OCI-LY7 (cell line): ENCODE measurements at regions of chr1 and their contacts with region 1.

Region 1: GRCh38 chr1:201023517-201023902 is at the start of gene KIF21B:
- DNase-seq: peak; percentile 92
- H3K4me3 ChIP-seq: peak within 1 kb of the TSS; percentile 80
- H3K27ac ChIP-seq: peak within 1 kb of the TSS; percentile 97
- H3K4me1 ChIP-seq: peaks cover 83% of the 10 kb centered on the region
- CTCF ChIP-seq: no peak
- total RNA-seq, gene KIF21B: 25.0 and 30.5 TPM in 2 replicates

Region 2: DNA sequence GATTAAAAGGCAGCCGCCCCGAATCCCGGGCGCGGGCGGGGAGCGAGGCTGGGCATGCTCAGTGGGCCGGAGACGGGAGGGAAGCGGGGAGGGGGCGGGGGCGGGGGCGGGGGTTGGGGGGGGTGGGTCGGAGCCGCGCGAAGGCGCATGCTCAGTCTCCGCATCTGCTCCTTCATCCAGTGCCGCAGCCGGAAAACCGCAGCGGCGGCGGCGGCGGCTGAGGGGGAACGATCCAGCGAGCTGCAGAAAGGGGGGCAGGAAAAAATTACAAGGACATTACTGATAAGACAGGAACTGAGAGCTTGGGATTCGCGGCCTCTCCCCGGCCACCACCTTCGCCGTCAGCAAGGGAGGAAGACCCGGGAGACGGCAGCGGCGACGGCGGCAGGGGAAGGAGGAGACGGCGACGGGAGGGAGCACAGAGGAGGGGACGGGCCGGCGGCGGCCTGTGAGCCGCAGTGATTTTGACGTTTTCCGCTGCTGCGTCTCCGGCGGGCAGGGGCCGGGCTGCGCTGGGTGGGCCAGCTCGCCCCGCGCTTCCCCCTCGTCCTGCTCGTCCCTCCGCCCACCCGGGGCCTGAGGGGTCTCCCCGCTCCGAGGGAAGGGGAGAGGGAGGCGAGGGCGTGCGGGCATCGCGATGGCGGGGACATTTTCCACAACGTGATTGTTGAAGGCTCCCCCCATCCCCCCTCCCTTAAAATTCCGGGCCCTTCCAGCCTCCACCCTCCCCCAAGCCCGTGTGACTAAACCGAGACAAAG is 284.6 kb before region 1 on chr1 and contains the start of gene CAMSAP2:
- CTCF ChIA-PET with region 1: no interaction called
- POLR2A ChIA-PET with region 1: no interaction called
- intact Hi-C with region 1: no loop called
- DNase-seq: peak; percentile 77
- H3K4me3 ChIP-seq: peak within 1 kb of the TSS; percentile 97
- H3K27ac ChIP-seq: peak within 1 kb of the TSS; percentile 55
- H3K4me1 ChIP-seq: peaks cover 23% of the 10 kb centered on the region
- CTCF ChIP-seq: no peak
- total RNA-seq, gene CAMSAP2: 9.2 and 10.0 TPM in 2 replicates

Region 3: DNA sequence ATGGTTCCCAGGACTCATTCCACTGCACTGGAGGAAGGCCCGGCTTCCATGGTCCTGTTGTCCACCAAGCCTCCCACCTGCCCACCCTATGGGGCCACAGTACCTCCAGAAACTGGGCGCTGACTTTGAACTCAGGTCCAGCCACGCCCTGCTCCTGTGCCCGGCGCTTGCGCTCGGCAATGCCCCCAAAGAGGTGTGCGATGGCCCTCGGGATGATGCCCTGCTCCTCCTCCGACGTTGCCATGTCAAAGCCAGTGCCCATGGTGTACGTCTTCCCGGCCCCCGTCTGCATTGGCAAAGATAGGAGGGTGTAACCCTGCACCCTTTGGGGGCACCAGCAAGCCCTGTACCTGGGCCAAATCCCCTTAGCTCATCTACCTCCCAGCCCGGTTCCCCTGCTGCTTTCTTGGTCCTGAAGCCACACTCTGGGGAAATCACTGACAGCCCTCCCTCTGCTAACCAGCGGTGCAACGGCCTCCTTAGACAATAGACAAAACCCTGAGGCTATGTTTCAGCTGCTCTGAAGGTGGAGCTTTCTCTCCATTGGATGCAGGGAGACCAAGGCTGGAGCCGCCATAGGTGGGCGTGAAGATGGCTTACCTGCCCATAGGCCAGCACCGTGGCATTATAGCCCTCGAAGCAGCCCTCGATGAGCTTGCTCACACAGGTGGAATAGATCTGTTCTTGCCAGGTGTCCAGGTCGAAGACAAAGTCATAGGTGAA is 14.7 kb before region 1 on chr1:
- CTCF ChIA-PET with region 1: interaction called, 12 read pairs
- POLR2A ChIA-PET with region 1: interaction called, 4 read pairs
- intact Hi-C with region 1: no loop called
- DNase-seq: no peak
- H3K4me3 ChIP-seq: no peak overlapping the region
- H3K27ac ChIP-seq: no peak overlapping the region
- H3K4me1 ChIP-seq: no peaks in the 10 kb centered on the region
- CTCF ChIP-seq: no peak

Region 4: DNA sequence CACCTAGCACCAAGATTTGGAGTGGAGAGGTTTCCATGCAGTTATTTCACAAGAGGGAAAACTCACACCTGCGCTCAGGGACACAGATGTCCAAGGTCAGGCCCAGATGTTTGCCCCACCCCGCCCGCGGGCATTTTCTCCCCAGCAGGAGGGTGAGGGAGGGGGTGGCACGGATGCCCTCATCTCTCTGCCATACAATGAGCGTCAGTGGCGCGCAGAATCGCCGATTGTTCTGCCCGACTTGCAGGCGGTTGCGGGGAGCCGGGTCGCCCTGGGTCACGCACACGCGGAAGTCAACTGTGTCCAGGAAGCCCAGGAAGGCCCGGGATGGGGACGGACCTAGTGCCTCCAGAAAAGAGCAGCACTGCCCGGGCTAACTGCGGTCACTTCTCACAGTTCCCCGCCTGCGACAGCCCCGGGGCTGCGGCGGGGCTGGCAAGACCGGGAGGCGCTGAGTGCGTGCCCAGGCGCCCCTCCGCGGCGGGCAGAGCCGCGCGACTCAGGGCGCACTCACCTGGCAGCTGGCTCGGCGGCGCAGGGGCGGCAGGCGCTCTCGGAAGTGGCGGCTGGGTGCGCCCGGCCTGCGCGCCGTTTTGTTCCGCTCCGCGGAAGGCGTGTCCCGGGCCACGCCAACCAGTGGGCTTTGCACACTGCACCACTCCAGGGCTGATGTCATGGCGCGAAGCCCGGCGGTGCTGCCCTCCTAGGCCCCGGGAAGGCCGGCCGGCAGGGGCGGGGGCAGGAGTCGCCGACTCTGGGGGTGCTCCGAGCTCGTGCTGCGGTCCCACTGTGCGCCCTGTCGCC is 483.2 kb after region 1 on chr1 and contains the start of gene CSRP1:
- CTCF ChIA-PET with region 1: no interaction called
- POLR2A ChIA-PET with region 1: no interaction called
- intact Hi-C with region 1: loop called (anchors 5 kb)
- DNase-seq: peak; percentile 87
- H3K4me3 ChIP-seq: peak within 1 kb of the TSS; percentile 80
- H3K27ac ChIP-seq: peak within 1 kb of the TSS; percentile 59
- H3K4me1 ChIP-seq: peaks cover 95% of the 10 kb centered on the region
- CTCF ChIP-seq: peak; percentile 40; the same call in 1 of the 2 replicates
- total RNA-seq, gene CSRP1: 46.4 and 52.8 TPM in 2 replicates